Head of caudate nucleus (tissue), 42 donors: ENCODE measurements at regions of chr10 and their contacts with region 1.

Region 1: GRCh38 chr10:62402508-62402907 is 28.3 kb downstream of the ZNF365 start:
- DNase-seq: no peak

Region 2: DNA sequence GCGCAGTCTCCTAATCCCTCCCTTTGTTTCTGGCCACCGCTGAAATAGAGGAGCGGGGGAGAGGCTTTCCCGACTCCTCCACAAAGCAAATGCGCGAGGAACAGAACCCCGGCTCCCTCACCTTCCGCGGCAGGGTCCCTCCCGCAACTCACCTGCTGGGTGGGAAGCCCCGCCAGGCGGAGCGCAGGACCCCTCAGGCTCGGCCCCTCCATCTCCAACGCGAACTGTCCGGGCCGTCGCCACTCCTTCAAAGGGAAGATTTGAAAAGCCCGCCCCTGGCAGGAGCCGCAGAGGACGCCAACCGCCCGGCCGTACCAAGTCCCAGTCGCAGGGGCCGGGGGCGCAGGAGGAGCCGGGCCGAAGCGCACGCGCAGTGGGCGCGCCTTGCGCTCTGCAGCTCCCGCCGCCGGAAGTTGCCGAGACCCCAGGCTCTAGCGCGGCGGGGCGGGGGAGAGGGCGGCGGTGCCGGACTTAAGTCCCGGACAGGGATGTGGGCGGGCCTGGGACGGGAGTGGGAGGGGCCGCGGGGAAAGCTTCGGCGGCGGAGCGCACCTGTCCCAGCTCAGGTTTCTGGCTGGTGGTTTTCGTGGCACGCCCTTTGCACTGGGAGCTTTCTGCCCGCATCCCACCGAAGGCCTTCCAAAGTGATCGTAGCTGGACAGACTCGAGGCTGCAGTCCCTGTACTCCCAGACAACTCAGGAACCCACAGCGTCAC is 134.0 kb before region 1 on chr10 and contains the start of gene RTKN2:
- intact Hi-C with region 1: loop called (anchors 10 kb)
- DNase-seq: peak; percentile 40 to 90 (median 80)

Region 3: DNA sequence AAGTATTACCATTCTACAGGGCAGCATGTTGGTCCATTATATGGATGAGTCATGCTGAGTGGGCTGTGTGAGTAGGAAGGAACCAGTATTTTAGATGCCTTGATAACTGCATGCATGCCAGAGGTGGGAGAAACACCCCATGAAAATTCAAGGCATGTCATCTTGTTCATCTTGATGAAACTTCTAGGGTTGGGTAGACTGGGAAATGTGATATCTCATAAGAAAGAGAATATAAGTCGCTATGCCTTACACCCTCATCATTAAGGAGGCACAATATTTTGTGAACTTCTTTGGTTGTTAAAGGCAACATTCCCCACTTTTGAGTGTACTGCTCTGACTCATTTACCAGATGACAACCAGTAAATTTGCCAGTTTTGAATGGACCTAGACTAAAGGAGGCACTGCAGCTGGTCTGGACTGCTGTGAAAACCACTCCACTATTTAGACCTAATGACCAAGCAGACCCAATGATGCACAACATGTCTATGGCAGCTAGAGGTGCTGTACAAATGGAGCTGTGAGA is 19.6 kb after region 1 on chr10:
- intact Hi-C with region 1: no loop called
- DNase-seq: no peak